ENCODE measurements at regions of chr2 and their contacts with region 1.

Region 1: DNA sequence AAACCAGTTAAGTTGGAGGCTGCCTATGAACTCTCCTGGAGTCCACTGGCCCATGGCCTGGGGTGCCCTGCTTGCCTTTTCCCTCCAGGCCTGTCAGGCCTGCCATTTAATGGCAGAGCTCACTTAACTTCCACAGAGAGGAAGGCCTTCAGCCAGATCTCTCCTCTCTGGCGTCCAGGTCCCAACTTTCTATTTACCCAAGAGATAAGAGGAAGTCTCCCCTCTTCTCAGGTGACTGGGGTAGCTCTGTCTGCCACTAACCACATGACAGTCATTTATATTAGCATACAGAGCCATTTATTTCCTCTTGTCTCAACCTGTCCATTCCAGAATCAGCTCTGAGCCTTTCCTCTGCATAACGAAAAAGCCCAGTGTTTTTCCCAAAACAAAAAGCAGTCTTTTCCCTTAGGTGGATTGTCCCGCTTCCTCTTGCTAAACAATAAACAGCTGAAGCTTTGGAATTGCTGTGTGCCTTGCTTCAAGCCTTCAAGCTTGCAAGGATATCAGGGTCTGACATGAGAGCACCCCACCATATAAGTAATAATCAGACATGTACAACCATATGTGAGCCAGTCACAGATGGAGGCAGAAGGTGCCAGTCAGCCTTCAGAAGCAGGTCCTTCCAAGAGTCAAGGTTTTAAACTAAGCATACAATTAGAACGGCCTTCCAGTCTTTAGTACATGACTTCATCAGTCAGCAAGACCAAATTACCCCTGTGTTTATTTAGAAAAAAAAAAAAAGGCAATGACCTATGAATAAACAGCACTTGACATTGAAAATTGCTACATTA is 71.2 kb upstream of the STPG4 start:
- DNase-seq: peak in 1 of 4 experiments; percentile 53
- ATAC-seq: peak; percentile 45
- H3K4me3 ChIP-seq: no peak overlapping the region
- H3K27ac ChIP-seq: no peak overlapping the region
- H3K4me1 ChIP-seq: peaks cover 27 to 51% of the 10 kb centered on the region in 2 experiments
- H3K27me3 ChIP-seq: no peaks in the 10 kb centered on the region
- CTCF ChIP-seq: no peak
- EP300 ChIP-seq: peak; percentile 6; the same call in 1 of the 2 replicates
- POLR2A ChIP-seq: no peak
- RAD21 ChIP-seq: no peak

Region 2: GRCh38 chr2:47058003-47058931 is 168.1 kb before region 1 on chr2:
- CTCF ChIA-PET with region 1: no interaction called
- POLR2A ChIA-PET with region 1: no interaction called
- in situ Hi-C with region 1: no loop called
- intact Hi-C with region 1: no loop called
- DNase-seq: no peak
- ATAC-seq: peak; percentile 42; the same call in 2 of the 3 replicates
- H3K4me3 ChIP-seq: no peak overlapping the region
- H3K27ac ChIP-seq: no peak overlapping the region
- H3K4me1 ChIP-seq: peaks cover 5 to 9% of the 10 kb centered on the region in 2 experiments; a peak in 2 of 5 replicates
- H3K27me3 ChIP-seq: no peaks in the 10 kb centered on the region
- CTCF ChIP-seq: no peak
- EP300 ChIP-seq: no peak
- POLR2A ChIP-seq: no peak
- RAD21 ChIP-seq: no peak

Region 3: GRCh38 chr2:47205576-47206141 is 20.7 kb before region 1 on chr2:
- CTCF ChIA-PET with region 1: no interaction called
- POLR2A ChIA-PET with region 1: no interaction called
- in situ Hi-C with region 1: no loop called
- intact Hi-C with region 1: no loop called
- DNase-seq: peak; percentile 42 to 82 (median 50)
- ATAC-seq: peak; percentile 92
- H3K4me3 ChIP-seq: no peak overlapping the region
- H3K27ac ChIP-seq: no peak overlapping the region
- H3K4me1 ChIP-seq: peaks cover 9 to 23% of the 10 kb centered on the region in 2 experiments
- H3K27me3 ChIP-seq: no peaks in the 10 kb centered on the region
- CTCF ChIP-seq: no peak
- EP300 ChIP-seq: peak; percentile 36; the same call in 1 of the 2 replicates
- POLR2A ChIP-seq: no peak
- RAD21 ChIP-seq: no peak

Region 4: GRCh38 chr2:47272031-47272864 is 45.9 kb after region 1 on chr2:
- CTCF ChIA-PET with region 1: no interaction called
- POLR2A ChIA-PET with region 1: interaction called, 3 read pairs
- in situ Hi-C with region 1: no loop called
- intact Hi-C with region 1: loop called (anchors 2 kb)
- DNase-seq: peak; percentile 83 to 94 (median 91)
- ATAC-seq: peak; percentile 94
- H3K4me3 ChIP-seq: peak overlapping the region; percentile 45
- H3K27ac ChIP-seq: peak overlapping the region; percentile 69
- H3K4me1 ChIP-seq: peaks cover 20 to 27% of the 10 kb centered on the region in 2 experiments
- H3K27me3 ChIP-seq: 0 out of 5 replicates have a peak, but pooled peaks cover 0 to under 1% of the 10 kb centered on the region in 2 experiments
- CTCF ChIP-seq: peak; percentile 83 to 95 (median 92)
- EP300 ChIP-seq: no peak
- POLR2A ChIP-seq: 0 out of 2 replicates have a peak, but pooled peaks have one; percentile 54
- RAD21 ChIP-seq: peak; percentile 90 to 92

Measured in K562 (cell line).